Activated naive CD4-positive, alpha-beta T cell treated with anti-CD3 and anti-CD28 coated beads for 36 hours (primary cell): ENCODE measurements at regions of chr14 and their contacts with region 1.

Region 1: GRCh38 chr14:21917699-21918436 is 244.2 kb upstream of the OR4E1 start:
- DNase-seq: peak; percentile 82
- H3K4me3 Mint-ChIP-seq: peak overlapping the region; percentile 69
- H3K27ac Mint-ChIP-seq: peak overlapping the region; percentile 89
- H3K4me1 Mint-ChIP-seq: peaks cover 58% of the 10 kb centered on the region
- H3K27me3 Mint-ChIP-seq: no peaks in the 10 kb centered on the region

Region 2: DNA sequence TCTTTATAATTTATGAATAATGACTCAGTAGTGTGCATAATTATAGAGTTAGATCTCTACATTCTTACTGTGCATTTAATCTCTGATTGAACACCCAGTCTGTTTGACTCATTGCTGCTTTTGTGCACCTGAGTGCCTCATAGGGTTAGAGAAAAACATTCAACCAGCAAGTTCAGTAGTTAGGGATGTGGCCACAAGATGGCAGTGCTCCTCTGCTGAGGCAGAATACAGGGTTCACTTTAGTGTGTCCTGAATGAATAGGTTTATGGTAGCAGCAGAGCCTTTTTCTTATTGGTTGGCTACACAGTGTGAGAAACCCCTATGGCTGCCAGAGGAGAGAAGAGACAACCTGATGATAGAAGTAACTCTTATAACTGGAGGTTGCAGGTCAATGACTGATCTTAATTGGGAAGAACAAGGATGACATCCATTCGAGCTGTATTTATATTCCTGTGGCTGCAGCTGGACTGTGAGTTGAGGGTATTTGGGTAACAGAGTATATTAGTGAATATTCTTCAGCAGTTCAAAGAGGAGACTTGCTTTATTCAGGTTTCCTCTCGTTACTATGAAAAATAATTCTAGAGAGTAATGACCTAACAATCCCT is 49.3 kb before region 1 on chr14:
- CTCF ChIA-PET with region 1: interaction called, 8 read pairs
- intact Hi-C with region 1: loop called (anchors 1 kb)
- DNase-seq: peak; percentile 95
- H3K4me3 Mint-ChIP-seq: peak overlapping the region; percentile 71
- H3K27ac Mint-ChIP-seq: peak overlapping the region; percentile 83
- H3K4me1 Mint-ChIP-seq: peaks cover 42% of the 10 kb centered on the region
- H3K27me3 Mint-ChIP-seq: no peaks in the 10 kb centered on the region

Region 3: GRCh38 chr14:21902650-21903103 is 15.2 kb before region 1 on chr14:
- CTCF ChIA-PET with region 1: interaction called, 21 read pairs
- intact Hi-C with region 1: no loop called
- DNase-seq: peak; percentile 70
- H3K4me3 Mint-ChIP-seq: peak overlapping the region; percentile 64
- H3K27ac Mint-ChIP-seq: peak overlapping the region; percentile 71
- H3K4me1 Mint-ChIP-seq: peaks cover 7% of the 10 kb centered on the region
- H3K27me3 Mint-ChIP-seq: no peaks in the 10 kb centered on the region

Region 4: GRCh38 chr14:21940887-21941856 is 23.3 kb after region 1 on chr14:
- CTCF ChIA-PET with region 1: interaction called, 6 read pairs
- intact Hi-C with region 1: loop called (anchors 1 kb)
- DNase-seq: peak; percentile 64
- H3K4me3 Mint-ChIP-seq: peak overlapping the region; percentile 78
- H3K27ac Mint-ChIP-seq: peak overlapping the region; percentile 81
- H3K4me1 Mint-ChIP-seq: peaks cover 25% of the 10 kb centered on the region
- H3K27me3 Mint-ChIP-seq: no peaks in the 10 kb centered on the region

Region 5: DNA sequence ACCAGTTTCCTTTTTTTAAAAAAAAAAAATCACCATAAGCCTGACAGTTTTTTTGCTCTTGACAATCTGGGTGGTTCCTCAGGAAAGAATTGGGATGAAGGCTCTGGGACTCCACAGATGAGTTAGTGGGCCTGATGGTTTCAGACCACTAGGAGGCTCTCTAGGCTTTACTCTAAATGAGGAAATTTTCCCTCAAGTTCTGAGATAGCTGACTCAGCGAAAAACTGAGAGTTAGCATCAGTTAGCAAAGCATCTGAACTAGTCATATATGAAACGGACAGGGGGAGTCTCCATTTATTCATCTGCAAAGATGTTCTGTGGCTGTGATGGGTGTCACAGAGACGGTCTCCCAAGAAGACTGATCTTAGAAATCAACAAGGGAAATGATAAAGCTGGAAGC is 70.1 kb after region 1 on chr14:
- CTCF ChIA-PET with region 1: interaction called, 4 read pairs
- intact Hi-C with region 1: loop called (anchors 2 kb)
- DNase-seq: peak; percentile 40
- H3K4me3 Mint-ChIP-seq: peak overlapping the region; percentile 27
- H3K27ac Mint-ChIP-seq: peak overlapping the region; percentile 92
- H3K4me1 Mint-ChIP-seq: peaks cover 34% of the 10 kb centered on the region
- H3K27me3 Mint-ChIP-seq: no peaks in the 10 kb centered on the region

Region 6: DNA sequence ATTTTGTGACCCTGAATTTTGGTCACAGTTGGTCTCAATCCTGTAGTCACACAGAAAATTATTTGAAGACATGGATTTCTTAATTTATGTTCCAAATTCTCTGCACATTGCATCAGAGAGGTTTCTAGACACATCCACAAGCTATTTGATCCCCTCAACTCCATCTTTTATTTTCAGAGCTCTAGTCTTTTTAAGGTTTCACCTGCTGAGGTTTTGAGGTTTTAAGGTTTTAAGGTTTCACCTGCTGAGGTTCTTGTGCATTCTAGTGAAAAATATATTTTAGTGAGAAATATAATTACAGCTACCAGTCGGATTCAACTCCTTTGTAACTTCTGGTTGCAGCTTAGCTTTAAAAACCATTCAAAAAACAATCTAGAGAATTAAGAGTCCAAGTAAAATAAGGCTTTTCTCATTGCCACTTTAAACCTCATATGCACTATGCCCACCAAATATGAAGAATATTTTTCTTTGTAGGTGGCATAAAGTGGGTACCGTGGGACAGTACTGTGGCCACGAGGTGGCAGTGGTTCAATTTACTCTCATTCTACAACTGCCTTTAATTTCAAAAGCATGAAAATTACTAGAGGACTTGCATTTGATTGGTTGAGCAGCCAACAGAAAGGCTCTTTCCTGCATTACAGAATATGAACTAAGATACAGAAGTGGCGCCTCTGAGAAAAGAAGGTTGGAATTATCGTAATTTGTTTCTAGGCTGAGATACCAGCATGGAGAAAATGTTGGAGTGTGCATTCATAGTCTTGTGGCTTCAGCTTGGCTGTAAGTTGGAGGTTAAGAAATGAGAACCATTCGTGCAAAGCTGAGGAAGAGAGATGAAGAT is 122.3 kb after region 1 on chr14:
- CTCF ChIA-PET with region 1: interaction called, 5 read pairs
- intact Hi-C with region 1: loop called (anchors 2 kb)
- DNase-seq: peak; percentile 70
- H3K4me3 Mint-ChIP-seq: peak overlapping the region; percentile 69
- H3K27ac Mint-ChIP-seq: peak overlapping the region; percentile 90
- H3K4me1 Mint-ChIP-seq: peaks cover 16% of the 10 kb centered on the region
- H3K27me3 Mint-ChIP-seq: no peaks in the 10 kb centered on the region

Region 7: GRCh38 chr14:22653012-22653621 is 735.2 kb after region 1 on chr14:
- CTCF ChIA-PET with region 1: interaction called, 4 read pairs
- intact Hi-C with region 1: loop called (anchors 5 kb)
- DNase-seq: peak; percentile 78
- H3K4me3 Mint-ChIP-seq: no peak overlapping the region
- H3K27ac Mint-ChIP-seq: no peak overlapping the region
- H3K4me1 Mint-ChIP-seq: no peaks in the 10 kb centered on the region
- H3K27me3 Mint-ChIP-seq: no peaks in the 10 kb centered on the region